ENCODE measurements at regions of chr11 and their contacts with region 1.

Region 1: GRCh38 chr11:64093233-64094039 is 57.7 kb downstream of the FLRT1 start:
- DNase-seq: no peak
- H3K27ac ChIP-seq: peak overlapping the region; percentile 76
- CTCF ChIP-seq: no peak

Region 2: GRCh38 chr11:64049509-64049908 is 43.9 kb before region 1 on chr11:
- CTCF ChIA-PET with region 1: no interaction called
- POLR2A ChIA-PET with region 1: interaction called, 11 read pairs
- DNase-seq: no peak
- H3K27ac ChIP-seq: no peak overlapping the region
- CTCF ChIP-seq: no peak

Region 3: DNA sequence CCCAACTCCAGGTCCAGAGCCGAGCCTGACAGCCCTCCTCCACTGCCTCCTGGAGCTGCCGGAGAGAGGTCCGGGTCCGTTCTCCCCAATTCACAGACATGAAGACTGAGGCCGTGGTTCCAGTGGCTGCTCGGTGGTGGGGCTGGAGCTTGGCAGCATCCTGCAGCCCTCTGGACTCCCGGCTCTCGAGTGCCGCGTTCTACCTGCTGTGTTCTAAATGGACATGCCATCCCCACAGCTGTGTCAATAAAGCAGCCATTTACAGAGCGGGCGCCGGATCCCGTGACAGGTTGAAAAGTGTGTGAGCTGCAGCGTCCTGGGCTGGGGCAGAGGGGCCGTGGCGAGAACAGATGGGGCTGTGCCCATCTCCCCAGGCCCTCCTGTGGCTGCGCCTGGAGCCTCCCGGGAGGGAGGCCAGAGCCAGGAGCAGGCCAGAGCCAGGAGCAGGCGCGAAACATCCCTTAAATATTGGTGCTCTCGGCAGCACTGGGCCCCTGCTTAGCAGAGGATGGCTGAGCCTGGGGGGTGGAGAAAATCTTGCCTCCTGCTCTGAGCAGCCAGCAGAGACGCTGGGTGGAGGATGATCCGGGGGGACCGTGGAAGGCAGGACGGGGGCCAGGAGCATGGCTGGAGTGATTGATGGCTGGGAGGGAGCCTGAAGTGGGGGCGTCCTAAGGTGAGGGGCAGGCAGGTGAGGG is 11.5 kb before region 1 on chr11:
- CTCF ChIA-PET with region 1: no interaction called
- POLR2A ChIA-PET with region 1: no interaction called
- DNase-seq: no peak
- H3K27ac ChIP-seq: no peak overlapping the region
- CTCF ChIP-seq: no peak

Region 4: DNA sequence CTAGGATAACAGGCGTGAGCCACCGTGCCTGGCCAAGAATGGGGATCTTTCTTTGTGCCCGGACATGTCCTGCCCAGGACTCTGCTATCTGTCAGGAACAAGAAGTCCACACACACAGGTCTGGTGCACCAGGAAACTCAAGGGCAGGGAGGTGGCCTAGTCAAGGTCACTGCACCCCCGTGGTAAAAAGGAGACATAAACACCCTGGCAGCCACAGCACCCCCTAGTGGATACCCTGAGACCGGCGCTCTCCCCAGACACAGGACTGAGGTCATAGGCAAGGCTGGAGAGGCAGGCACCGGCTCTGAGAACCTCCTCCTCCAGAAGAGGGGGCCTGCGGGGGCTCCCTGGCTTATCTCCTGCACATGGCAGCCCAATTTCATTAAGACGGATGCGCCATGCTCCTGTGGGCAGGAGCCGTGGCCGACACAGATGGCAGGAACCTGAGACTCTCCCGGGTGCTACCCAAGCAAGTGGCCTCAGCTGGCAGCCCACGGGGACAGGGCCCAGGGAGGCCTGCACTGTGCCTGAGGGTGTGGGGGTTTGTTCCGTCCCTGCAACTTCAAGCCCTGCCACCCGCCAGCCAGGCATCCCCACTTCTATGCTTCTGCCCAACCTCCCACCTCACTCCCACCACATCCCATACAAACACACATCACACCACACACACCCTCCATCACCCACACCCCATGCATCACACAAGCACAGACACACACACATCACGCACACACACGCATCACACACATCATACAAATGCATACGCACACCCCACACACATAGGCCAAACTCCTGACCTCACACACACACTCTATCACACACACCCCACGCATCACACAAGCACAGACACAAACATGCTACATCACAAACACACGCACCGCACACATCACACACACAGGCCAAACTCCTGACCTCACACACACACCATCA is 52.9 kb after region 1 on chr11:
- CTCF ChIA-PET with region 1: no interaction called
- POLR2A ChIA-PET with region 1: no interaction called
- DNase-seq: peak; percentile 20
- H3K27ac ChIP-seq: peak overlapping the region; percentile 56
- CTCF ChIP-seq: peak; percentile 65

Measured in RWPE1 (cell line).